ENCODE measurements at regions of chr4 and their contacts with region 1.

Region 1: DNA sequence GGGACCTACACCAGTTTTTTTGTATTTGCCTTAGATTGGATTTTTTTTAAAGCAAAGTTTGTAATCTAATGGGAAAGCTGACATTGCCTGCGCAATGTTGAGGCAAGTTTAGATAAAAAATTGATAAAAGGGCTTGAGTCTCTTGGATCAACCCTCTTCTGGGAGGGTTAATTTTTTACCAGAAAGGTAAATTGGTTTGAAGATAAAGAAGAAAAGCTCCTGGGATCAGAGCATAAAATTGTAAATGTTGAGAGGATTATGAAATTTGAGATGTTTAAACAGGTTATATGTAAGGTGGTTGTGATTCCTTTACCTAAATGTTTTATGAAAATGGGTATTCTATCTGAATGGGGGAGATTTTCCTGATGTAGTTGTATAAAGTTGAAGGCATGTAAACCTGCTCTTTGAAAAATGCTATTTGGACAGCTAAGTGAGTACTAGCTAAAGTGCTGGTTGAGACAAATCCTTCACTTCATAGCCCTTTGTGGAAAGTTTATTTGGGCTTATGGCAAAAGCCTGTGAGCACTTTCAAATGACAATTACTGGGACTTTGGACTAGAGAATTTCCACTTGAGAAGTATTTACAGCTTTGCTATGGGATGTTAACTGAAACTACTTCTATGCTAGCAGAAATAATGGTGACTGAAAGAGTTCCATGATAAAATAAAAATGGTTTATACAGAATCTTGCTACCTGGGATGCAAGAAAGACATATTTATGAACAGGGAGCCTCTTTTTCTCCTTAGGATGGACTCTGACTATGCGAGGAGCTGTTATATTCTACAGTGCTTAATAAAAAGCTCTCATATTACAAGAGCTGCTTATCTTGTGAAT is 56.2 kb downstream of the UGT2B10 start:
- DNase-seq: no peak
- H3K4me3 ChIP-seq: peak overlapping the region in 1 of 4 donors; percentile 21
- H3K27ac ChIP-seq: peak overlapping the region; percentile 50 to 75 (median 57)
- H3K4me1 ChIP-seq: peaks cover 0 to 26% (median 10%) of the 10 kb centered on the region in 4 donors
- H3K27me3 ChIP-seq: no peaks in the 10 kb centered on the region
- CTCF ChIP-seq: no peak
- EP300 ChIP-seq: no peak
- POLR2A ChIP-seq: no peak

Region 2: GRCh38 chr4:68855771-68856170 is 16.3 kb before region 1 on chr4:
- in situ Hi-C with region 1: no loop called
- intact Hi-C with region 1: loop called (anchors 2 kb)
- DNase-seq: no peak
- H3K4me3 ChIP-seq: no peak overlapping the region
- H3K27ac ChIP-seq: no peak overlapping the region
- H3K4me1 ChIP-seq: no peaks in the 10 kb centered on the region
- H3K27me3 ChIP-seq: no peaks in the 10 kb centered on the region
- CTCF ChIP-seq: no peak
- EP300 ChIP-seq: no peak
- POLR2A ChIP-seq: no peak

Region 3: GRCh38 chr4:69377562-69377961 is 505.5 kb after region 1 on chr4:
- in situ Hi-C with region 1: no loop called
- intact Hi-C with region 1: no loop called
- DNase-seq: no peak
- H3K4me3 ChIP-seq: no peak overlapping the region
- H3K27ac ChIP-seq: no peak overlapping the region
- H3K4me1 ChIP-seq: no peaks in the 10 kb centered on the region
- H3K27me3 ChIP-seq: no peaks in the 10 kb centered on the region
- CTCF ChIP-seq: no peak
- EP300 ChIP-seq: no peak
- POLR2A ChIP-seq: no peak

Measured in transverse colon (tissue), 4 donors.